Activated T-helper 1 cell treated with anti-CD3 and anti-CD28 coated beads, Interleukin-12 subunit alpha, Interleukin-12 subunit beta, Interleukin-2, Interleukin-4 antibody, amounts not matched to agents 30 ng/mL and 10 ng/mL and 1 ng/mL, durations not matched to agents 14 hours and 24 hours and 36 hours (primary cell): ENCODE measurements at regions of chr2 and their contacts with region 1.

Region 1: GRCh38 chr2:88002359-88002707 is 14.0 kb downstream of the RNU2-63P start:
- DNase-seq: no peak
- H3K4me3 Mint-ChIP-seq: no peak overlapping the region
- H3K27ac Mint-ChIP-seq: no peak overlapping the region
- H3K4me1 Mint-ChIP-seq: peaks cover 16% of the 10 kb centered on the region
- H3K27me3 Mint-ChIP-seq: peaks cover 9% of the 10 kb centered on the region

Region 2: GRCh38 chr2:88159955-88160415 is 157.7 kb after region 1 on chr2:
- intact Hi-C with region 1: loop called (anchors 1 kb)
- DNase-seq: peak; percentile 33
- H3K4me3 Mint-ChIP-seq: no peak overlapping the region
- H3K27ac Mint-ChIP-seq: no peak overlapping the region
- H3K4me1 Mint-ChIP-seq: no peaks in the 10 kb centered on the region
- H3K27me3 Mint-ChIP-seq: peaks cover 3% of the 10 kb centered on the region